ENCODE measurements at regions of chr15 and their contacts with region 1.

Region 1: DNA sequence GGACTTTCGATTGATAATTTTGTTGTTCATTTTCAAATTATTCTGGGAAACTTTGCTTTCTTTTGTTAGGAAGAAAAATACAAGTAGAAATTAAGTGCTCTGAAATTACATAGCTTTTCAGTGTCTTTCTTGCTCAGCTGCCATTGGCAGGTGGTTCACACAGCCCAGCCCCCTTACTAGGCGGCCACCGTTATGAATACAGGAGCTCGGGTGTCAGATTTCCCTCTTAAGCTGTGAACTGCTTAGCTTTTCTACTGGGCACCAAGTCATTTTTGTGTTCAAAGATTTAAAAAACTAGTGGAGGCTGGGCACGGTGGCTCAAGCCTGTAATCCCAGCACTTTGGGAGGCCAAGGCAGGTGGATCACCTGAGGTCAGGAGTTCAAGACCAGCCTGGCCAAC is 55.2 kb downstream of the HMG20A start:
- DNase-seq: no peak
- ATAC-seq: no peak
- H3K4me3 ChIP-seq: no peak overlapping the region
- H3K4me3 Mint-ChIP-seq: no peak overlapping the region
- H3K27ac ChIP-seq: no peak overlapping the region
- H3K27ac Mint-ChIP-seq: no peak overlapping the region
- H3K4me1 ChIP-seq: no peaks in the 10 kb centered on the region
- H3K4me1 Mint-ChIP-seq: peaks cover 0 to 5% (median 0%) of the 10 kb centered on the region in 7 donors
- H3K27me3 ChIP-seq: no peaks in the 10 kb centered on the region
- H3K27me3 Mint-ChIP-seq: no peaks in the 10 kb centered on the region

Region 2: GRCh38 chr15:77305953-77306352 is 169.9 kb before region 1 on chr15:
- CTCF ChIA-PET with region 1: no interaction called
- POLR2A ChIA-PET with region 1: no interaction called
- intact Hi-C with region 1: no loop called
- DNase-seq: no peak
- ATAC-seq: no peak
- H3K4me3 ChIP-seq: no peak overlapping the region
- H3K4me3 Mint-ChIP-seq: no peak overlapping the region
- H3K27ac ChIP-seq: no peak overlapping the region
- H3K27ac Mint-ChIP-seq: no peak overlapping the region
- H3K4me1 ChIP-seq: no peaks in the 10 kb centered on the region
- H3K4me1 Mint-ChIP-seq: peaks cover 0 to 11% (median 6%) of the 10 kb centered on the region in 7 donors
- H3K27me3 ChIP-seq: no peaks in the 10 kb centered on the region
- H3K27me3 Mint-ChIP-seq: no peaks in the 10 kb centered on the region

Region 3: DNA sequence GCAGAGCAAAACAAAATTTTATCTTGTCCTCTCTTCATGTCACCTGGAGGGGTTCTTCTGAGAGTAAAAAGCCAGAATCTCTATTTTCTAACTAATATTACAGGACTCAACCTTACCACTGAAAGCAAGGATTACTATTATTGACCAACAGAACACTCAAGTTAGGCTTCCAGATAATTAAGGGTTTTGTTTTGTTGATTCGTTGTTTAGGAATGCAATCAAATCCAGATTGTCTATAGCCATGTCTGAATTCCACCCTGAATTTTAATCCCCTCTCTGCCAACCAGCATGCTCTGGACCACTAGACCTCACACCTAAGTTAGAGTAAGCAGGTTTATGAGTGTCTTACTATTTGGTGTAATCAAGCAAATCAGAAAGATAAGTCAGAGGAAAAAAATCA is 146.7 kb before region 1 on chr15:
- CTCF ChIA-PET with region 1: no interaction called
- POLR2A ChIA-PET with region 1: no interaction called
- intact Hi-C with region 1: loop called in 1 of 2 experiments (anchors 5 kb)
- DNase-seq: no peak
- ATAC-seq: no peak
- H3K4me3 ChIP-seq: no peak overlapping the region
- H3K4me3 Mint-ChIP-seq: no peak overlapping the region
- H3K27ac ChIP-seq: no peak overlapping the region
- H3K27ac Mint-ChIP-seq: no peak overlapping the region
- H3K4me1 ChIP-seq: no peaks in the 10 kb centered on the region
- H3K4me1 Mint-ChIP-seq: peaks cover 0 to 2% (median 0%) of the 10 kb centered on the region in 7 donors
- H3K27me3 ChIP-seq: no peaks in the 10 kb centered on the region
- H3K27me3 Mint-ChIP-seq: no peaks in the 10 kb centered on the region

Region 4: GRCh38 chr15:77393471-77393840 is 82.4 kb before region 1 on chr15:
- CTCF ChIA-PET with region 1: no interaction called
- POLR2A ChIA-PET with region 1: no interaction called
- intact Hi-C with region 1: no loop called
- DNase-seq: no peak
- ATAC-seq: no peak
- H3K4me3 ChIP-seq: no peak overlapping the region
- H3K4me3 Mint-ChIP-seq: no peak overlapping the region
- H3K27ac ChIP-seq: no peak overlapping the region
- H3K27ac Mint-ChIP-seq: no peak overlapping the region
- H3K4me1 ChIP-seq: no peaks in the 10 kb centered on the region
- H3K4me1 Mint-ChIP-seq: peaks cover 0 to 4% (median 0%) of the 10 kb centered on the region in 7 donors
- H3K27me3 ChIP-seq: no peaks in the 10 kb centered on the region
- H3K27me3 Mint-ChIP-seq: peaks cover 0 to 4% (median 0%) of the 10 kb centered on the region in 5 donors

Region 5: DNA sequence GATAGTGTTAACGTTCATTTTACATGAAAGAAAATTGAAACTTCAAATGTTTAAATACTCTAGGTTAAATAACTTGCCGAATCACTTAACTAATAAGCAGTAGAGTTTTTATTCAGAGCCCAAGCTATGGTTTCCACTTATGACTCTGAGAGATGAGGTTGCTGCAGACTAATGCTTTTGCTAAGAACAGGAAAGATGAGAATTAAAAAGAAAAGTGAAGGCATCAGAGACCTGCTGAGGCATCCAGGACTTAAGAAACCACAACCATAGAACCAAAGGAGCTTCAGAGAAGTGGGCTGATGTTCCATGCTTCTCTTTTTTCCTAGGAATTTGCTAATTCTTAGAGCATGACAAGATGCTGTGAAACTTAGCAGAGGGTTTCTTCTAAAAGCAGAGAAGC is 45.7 kb before region 1 on chr15:
- CTCF ChIA-PET with region 1: no interaction called
- POLR2A ChIA-PET with region 1: no interaction called
- intact Hi-C with region 1: loop called in 1 of 2 experiments (anchors 5 kb)
- DNase-seq: no peak
- ATAC-seq: no peak
- H3K4me3 ChIP-seq: no peak overlapping the region
- H3K4me3 Mint-ChIP-seq: no peak overlapping the region
- H3K27ac ChIP-seq: no peak overlapping the region
- H3K27ac Mint-ChIP-seq: peak overlapping the region in 1 of 9 donors; percentile 0
- H3K4me1 ChIP-seq: peaks cover 9 to 10% of the 10 kb centered on the region in 2 donors
- H3K4me1 Mint-ChIP-seq: peaks cover 22 to 77% (median 60%) of the 10 kb centered on the region in 7 donors
- H3K27me3 ChIP-seq: no peaks in the 10 kb centered on the region
- H3K27me3 Mint-ChIP-seq: no peaks in the 10 kb centered on the region

Measured in naive thymus-derived CD4-positive, alpha-beta T cell (primary cell).